ENCODE measurements at regions of chr1 and their contacts with region 1.

Region 1: DNA sequence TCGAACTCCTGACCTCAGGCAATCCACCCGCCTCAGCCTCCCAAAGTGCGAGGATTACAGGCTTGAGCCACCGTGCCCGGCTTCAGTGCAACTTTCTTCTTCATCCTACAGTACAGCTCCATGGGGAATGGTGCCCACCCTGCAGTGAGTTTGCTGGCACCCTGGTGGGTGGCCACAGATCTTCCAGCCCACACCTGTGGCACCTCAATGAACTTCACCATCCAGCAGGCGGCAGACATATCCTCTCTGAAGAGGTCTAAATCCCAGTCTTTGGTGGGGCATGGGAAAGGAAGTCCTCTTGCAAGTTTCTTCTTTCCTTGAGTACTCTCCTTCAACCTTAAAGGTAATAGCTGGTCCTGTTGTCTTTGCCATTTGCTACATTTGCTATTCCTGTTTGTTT is 18.1 kb upstream of the ZBTB8A start:
- DNase-seq: no peak
- H3K4me3 Mint-ChIP-seq: peak overlapping the region; percentile 61
- H3K27ac Mint-ChIP-seq: no peak overlapping the region
- H3K4me1 Mint-ChIP-seq: peaks cover 8% of the 10 kb centered on the region
- H3K27me3 Mint-ChIP-seq: peaks cover under 1% of the 10 kb centered on the region

Region 2: DNA sequence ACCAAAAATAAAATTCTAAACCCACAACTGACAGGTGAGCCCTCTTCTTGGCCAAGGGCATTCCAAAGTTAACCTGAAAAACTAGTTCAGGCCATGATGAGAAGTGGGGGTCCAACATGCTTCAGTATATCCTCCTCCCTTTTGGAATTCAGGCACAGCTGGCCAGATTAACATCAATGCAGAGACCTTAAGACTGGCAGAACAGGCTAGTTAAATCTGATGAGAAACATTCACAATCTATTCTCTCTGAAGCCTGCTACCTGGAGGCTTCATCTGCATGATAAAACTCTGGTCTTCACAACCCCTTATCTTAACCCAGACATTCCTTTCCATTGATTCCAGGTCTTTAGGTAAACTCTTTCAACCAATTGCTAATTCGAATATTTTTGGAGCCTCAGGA is 83.0 kb before region 1 on chr1:
- CTCF ChIA-PET with region 1: no interaction called
- POLR2A ChIA-PET with region 1: no interaction called
- DNase-seq: no peak
- H3K4me3 Mint-ChIP-seq: no peak overlapping the region
- H3K27ac Mint-ChIP-seq: no peak overlapping the region
- H3K4me1 Mint-ChIP-seq: no peaks in the 10 kb centered on the region
- H3K27me3 Mint-ChIP-seq: peaks cover 38% of the 10 kb centered on the region

Region 3: DNA sequence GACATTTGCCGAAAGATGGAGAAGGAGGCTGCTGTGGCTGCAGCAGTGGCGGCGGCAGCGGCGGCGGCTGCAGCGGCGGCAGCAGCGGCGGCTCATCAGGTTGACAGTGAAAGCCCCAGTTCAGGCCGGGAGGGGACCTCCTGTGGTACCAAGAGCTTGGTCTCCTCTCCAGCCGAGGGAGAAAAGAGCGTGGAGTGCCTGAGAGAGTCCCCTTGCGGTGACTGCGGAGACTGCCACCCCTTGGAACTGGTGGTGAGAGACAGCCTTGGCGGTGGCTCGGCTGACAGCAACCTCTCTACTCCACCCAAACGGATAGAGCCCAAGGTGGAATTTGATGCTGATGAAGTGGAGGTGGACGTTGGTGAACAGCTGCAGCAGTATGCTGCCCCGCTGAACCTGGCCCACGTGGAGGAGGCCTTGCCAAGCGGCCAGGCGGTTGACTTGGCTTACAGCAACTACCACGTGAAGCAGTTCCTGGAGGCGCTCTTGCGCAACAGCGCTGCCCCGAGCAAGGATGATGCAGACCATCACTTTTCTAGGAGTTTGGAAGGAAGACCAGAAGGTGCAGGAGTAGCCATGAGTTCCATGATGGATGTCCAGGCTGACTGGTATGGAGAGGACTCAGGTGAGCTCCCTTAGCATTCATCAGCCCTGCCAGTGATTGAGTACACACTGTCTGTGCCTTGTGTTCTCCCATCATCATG is 50.0 kb before region 1 on chr1:
- CTCF ChIA-PET with region 1: no interaction called
- POLR2A ChIA-PET with region 1: no interaction called
- DNase-seq: no peak
- H3K4me3 Mint-ChIP-seq: no peak overlapping the region
- H3K27ac Mint-ChIP-seq: no peak overlapping the region
- H3K4me1 Mint-ChIP-seq: no peaks in the 10 kb centered on the region
- H3K27me3 Mint-ChIP-seq: peaks cover 19% of the 10 kb centered on the region

Region 4: GRCh38 chr1:32538887-32539583 is 17.9 kb after region 1 on chr1 and contains the start of gene ZBTB8A:
- CTCF ChIA-PET with region 1: interaction called, 40 read pairs
- POLR2A ChIA-PET with region 1: interaction called, 3 read pairs
- DNase-seq: no peak
- H3K4me3 Mint-ChIP-seq: peak within 1 kb of the TSS; percentile 70
- H3K27ac Mint-ChIP-seq: no peak within 1 kb of the TSS
- H3K4me1 Mint-ChIP-seq: peaks cover 9% of the 10 kb centered on the region
- H3K27me3 Mint-ChIP-seq: peaks cover 75% of the 10 kb centered on the region
- total RNA-seq, gene ZBTB8A: 0.18 to 0.20 TPM

Region 5: DNA sequence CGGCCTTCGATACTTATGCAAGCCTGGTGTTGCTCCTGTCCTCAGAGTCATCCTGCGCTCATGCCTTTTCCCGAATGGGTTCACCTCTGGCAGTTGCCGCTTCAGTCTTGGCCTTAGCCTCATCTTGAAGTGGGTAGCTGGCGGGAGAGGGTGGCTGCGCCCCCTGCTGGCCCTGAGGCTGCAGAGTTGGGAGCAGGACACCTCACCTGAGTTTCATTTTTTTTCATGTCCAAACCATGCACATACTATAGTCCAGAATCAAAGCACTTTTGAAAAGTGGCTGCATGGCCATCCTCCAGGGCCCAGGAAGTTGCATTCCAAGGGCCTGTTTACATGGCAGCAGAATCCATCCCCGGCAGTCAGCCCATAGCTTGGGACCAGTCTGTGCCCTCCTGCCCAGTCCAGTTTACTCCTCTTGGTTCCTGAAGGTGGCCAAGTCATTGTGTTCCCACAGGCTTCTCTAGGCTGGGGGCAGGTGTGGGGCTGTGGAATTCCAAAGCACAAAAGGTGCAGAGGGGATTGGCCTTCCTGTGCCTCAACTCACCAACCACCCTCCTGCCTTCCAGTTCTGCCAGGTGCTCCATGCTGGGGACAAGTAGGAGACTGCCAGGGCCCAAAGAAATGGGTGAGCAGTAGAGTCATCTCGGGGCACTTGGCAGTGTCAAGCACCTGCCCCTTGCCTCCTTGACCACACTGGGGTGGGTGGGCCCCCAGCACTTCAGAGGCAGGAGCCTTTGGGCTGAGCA is 252.0 kb after region 1 on chr1:
- CTCF ChIA-PET with region 1: interaction called, 11 read pairs
- POLR2A ChIA-PET with region 1: no interaction called
- DNase-seq: peak; percentile 78
- H3K4me3 Mint-ChIP-seq: no peak overlapping the region
- H3K27ac Mint-ChIP-seq: peak overlapping the region; percentile 15
- H3K4me1 Mint-ChIP-seq: peaks cover 15% of the 10 kb centered on the region
- H3K27me3 Mint-ChIP-seq: no peaks in the 10 kb centered on the region

Region 6: GRCh38 chr1:32870615-32871363 is 349.6 kb after region 1 on chr1 and contains the start of gene FNDC5:
- CTCF ChIA-PET with region 1: interaction called, 14 read pairs
- POLR2A ChIA-PET with region 1: no interaction called
- DNase-seq: no peak
- H3K4me3 Mint-ChIP-seq: no peak within 1 kb of the TSS
- H3K27ac Mint-ChIP-seq: no peak within 1 kb of the TSS
- H3K4me1 Mint-ChIP-seq: peaks cover 18% of the 10 kb centered on the region
- H3K27me3 Mint-ChIP-seq: peaks cover 48% of the 10 kb centered on the region
- total RNA-seq, gene FNDC5: not detected

Measured in activated CD4-positive, alpha-beta memory T cell treated with anti-CD3 and anti-CD28 coated beads, Interleukin-2, amount 10 ng/mL, durations not matched to agents 7 days and 5 days (primary cell).